Activated CD4-positive, alpha-beta memory T cell treated with anti-CD3 and anti-CD28 coated beads for 36 hours (primary cell): ENCODE measurements at regions of chr14 and their contacts with region 1.

Region 1: DNA sequence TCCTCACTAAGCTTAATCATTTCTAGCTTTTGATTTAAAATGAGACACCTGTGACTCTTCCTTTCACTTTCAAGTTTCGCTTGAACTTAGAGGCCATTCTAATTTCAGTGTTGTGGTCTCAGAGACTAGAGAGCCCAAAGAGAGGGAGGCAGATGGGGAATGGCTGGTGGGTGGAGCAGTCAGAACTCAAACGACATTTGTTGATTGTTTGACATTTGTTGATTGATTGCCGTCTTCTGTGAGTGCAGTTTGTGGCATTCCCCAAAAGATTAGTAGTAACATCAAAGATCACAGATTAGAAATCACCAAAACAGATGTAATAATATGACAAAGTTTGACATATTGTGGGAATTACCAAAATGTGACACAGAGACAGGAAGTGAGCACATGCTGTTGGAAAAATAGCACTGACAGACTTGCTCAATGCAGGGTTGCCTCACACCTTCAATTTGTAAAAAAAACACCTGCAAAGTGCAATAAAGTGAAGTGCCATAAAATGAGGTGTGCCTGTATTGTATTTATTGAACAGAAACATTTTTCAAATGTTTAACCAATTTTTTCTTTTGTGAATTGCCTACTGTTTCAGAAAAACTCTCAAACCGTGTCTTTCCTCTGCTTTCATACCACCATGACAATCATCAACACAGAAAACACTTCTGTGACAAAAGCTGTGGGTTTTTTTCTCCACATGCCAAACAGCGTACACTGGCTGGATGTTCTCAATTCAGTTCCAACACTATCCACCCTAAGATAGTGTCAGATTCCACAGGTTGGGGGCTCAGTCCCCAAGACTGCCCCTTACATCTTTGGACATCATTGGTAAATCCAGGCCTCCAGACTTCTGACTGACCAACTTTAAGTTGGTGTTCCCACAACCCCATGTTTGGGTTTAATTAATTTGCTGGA is 376.3 kb upstream of the RGS6 start:
- DNase-seq: peak; percentile 76
- H3K4me3 Mint-ChIP-seq: peak overlapping the region; percentile 55
- H3K27ac Mint-ChIP-seq: peak overlapping the region; percentile 98
- H3K4me1 Mint-ChIP-seq: peaks cover 75% of the 10 kb centered on the region
- H3K27me3 Mint-ChIP-seq: no peaks in the 10 kb centered on the region

Region 2: GRCh38 chr14:71138448-71139293 is 417.2 kb before region 1 on chr14:
- CTCF ChIA-PET with region 1: interaction called, 4 read pairs
- POLR2A ChIA-PET with region 1: interaction called, 8 read pairs
- intact Hi-C with region 1: loop called (anchors 1 kb)
- DNase-seq: peak; percentile 68
- H3K4me3 Mint-ChIP-seq: no peak overlapping the region
- H3K27ac Mint-ChIP-seq: no peak overlapping the region
- H3K4me1 Mint-ChIP-seq: peaks cover 24% of the 10 kb centered on the region
- H3K27me3 Mint-ChIP-seq: no peaks in the 10 kb centered on the region

Region 3: GRCh38 chr14:71290960-71291466 is 264.9 kb before region 1 on chr14:
- CTCF ChIA-PET with region 1: no interaction called
- POLR2A ChIA-PET with region 1: interaction called, 4 read pairs
- intact Hi-C with region 1: loop called (anchors 1 kb)
- DNase-seq: peak; percentile 70
- H3K4me3 Mint-ChIP-seq: no peak overlapping the region
- H3K27ac Mint-ChIP-seq: peak overlapping the region; percentile 61
- H3K4me1 Mint-ChIP-seq: peaks cover 17% of the 10 kb centered on the region
- H3K27me3 Mint-ChIP-seq: no peaks in the 10 kb centered on the region

Region 4: GRCh38 chr14:71403656-71404055 is 152.3 kb before region 1 on chr14:
- CTCF ChIA-PET with region 1: no interaction called
- POLR2A ChIA-PET with region 1: interaction called, 3 read pairs
- intact Hi-C with region 1: loop called (anchors 1 kb)
- DNase-seq: peak; percentile 35
- H3K4me3 Mint-ChIP-seq: no peak overlapping the region
- H3K27ac Mint-ChIP-seq: no peak overlapping the region
- H3K4me1 Mint-ChIP-seq: peaks cover 35% of the 10 kb centered on the region
- H3K27me3 Mint-ChIP-seq: no peaks in the 10 kb centered on the region

Region 5: DNA sequence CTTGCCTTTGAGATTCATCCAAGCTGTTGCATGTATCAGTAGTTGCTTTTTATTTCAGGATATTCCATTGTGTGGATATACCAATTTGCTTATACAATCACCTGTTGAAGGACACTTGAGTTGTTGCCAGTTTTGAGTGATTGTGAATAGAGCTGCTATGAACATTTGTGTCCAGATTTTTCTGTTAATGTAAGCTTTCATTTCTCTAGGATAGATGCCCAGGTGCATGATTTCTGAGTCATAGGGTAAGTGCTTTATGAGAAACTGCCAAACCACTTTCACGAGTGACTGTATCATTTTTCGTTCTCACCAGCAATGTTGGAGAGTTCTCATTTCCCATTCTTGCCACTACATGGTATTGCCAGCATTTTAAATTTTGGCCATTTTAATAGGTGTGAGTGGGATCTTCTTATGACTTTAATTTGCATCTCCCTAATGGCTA is 58.2 kb before region 1 on chr14:
- CTCF ChIA-PET with region 1: interaction called, 3 read pairs
- POLR2A ChIA-PET with region 1: no interaction called
- intact Hi-C with region 1: loop called (anchors 1 kb)
- DNase-seq: no peak
- H3K4me3 Mint-ChIP-seq: no peak overlapping the region
- H3K27ac Mint-ChIP-seq: no peak overlapping the region
- H3K4me1 Mint-ChIP-seq: peaks cover 15% of the 10 kb centered on the region
- H3K27me3 Mint-ChIP-seq: no peaks in the 10 kb centered on the region

Region 6: GRCh38 chr14:71665157-71665556 is 109.2 kb after region 1 on chr14:
- CTCF ChIA-PET with region 1: no interaction called
- POLR2A ChIA-PET with region 1: no interaction called
- intact Hi-C with region 1: no loop called
- DNase-seq: no peak
- H3K4me3 Mint-ChIP-seq: no peak overlapping the region
- H3K27ac Mint-ChIP-seq: no peak overlapping the region
- H3K4me1 Mint-ChIP-seq: peaks cover 2% of the 10 kb centered on the region
- H3K27me3 Mint-ChIP-seq: no peaks in the 10 kb centered on the region